ENCODE measurements at regions of chr5 and their contacts with region 1.

Region 1: GRCh38 chr5:73783828-73784227 is 157.8 kb downstream of the ARHGEF28 start:
- DNase-seq: no peak
- H3K4me3 ChIP-seq: no peak overlapping the region
- H3K27ac ChIP-seq: no peak overlapping the region
- H3K4me1 ChIP-seq: no peaks in the 10 kb centered on the region
- H3K27me3 ChIP-seq: no peaks in the 10 kb centered on the region
- CTCF ChIP-seq: no peak
- EP300 ChIP-seq: no peak
- POLR2A ChIP-seq: no peak

Region 2: DNA sequence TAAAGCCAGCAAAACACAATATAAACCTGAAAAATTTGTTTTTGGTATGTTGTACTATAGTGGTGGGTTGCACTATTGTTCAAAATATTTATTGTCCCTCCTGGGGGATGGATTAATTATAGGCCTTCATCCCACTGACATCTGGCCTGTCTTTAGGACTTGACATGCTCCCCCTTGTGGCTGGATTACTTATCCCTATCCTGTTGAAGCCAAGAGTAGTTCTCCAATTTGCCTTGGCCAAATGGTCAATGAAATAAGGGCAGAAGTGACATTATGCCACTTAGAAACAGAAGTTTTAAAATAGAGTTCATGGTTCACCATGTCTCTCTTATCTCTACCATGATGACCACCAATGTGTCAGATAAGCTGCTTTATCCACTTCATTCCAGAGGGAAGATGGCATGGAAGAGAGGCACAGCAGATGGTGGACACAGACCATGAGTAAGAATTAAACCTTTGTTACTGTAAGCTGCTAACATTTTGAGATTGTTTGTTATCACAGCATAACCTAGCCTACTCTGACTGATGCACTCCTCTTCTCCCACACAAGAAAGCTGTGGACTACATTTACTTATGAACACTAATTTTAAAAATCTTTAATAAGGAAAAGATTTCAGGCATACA is 187.0 kb before region 1 on chr5:
- intact Hi-C with region 1: loop called in 1 of 4 experiments (anchors 5 kb)
- DNase-seq: no peak
- H3K4me3 ChIP-seq: no peak overlapping the region
- H3K27ac ChIP-seq: no peak overlapping the region
- H3K4me1 ChIP-seq: no peaks in the 10 kb centered on the region
- H3K27me3 ChIP-seq: no peaks in the 10 kb centered on the region
- CTCF ChIP-seq: no peak
- EP300 ChIP-seq: no peak
- POLR2A ChIP-seq: no peak

Region 3: DNA sequence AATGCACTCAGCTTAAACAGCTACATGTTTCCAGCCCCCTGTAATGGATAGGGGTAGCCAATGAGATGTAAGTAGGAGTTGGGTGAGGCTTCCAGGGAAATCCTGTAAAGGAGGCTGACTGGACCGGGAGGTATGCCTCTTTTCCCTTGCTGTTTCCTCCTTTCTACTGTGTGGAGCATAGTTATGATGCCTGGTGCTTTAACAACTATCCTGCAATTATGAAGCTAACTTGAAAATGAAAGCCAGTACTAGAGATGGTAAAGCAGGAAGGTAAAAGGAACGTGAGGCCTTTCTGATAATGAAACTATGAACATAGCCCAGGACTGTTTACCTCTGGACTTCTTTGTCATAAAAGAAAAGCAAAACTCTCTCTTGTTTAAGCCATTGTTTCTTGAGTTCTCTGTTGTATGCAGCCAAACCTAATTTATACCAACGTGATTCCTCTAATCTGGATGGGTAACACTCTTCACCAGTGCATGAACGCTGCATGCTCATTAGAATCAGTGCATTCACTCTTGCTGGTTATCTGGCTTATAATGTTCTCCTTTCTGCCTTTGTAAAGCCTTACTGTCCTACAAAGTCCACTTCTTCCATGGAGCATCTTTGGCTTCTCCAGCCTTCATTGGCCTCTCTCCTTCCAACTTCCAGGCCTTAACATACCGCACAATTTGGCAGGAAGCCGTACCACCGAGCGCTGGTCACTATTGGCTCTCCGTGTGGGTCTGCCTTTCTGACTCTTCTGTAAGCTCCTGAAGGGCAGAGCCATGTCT is 166.1 kb before region 1 on chr5:
- intact Hi-C with region 1: loop called in 1 of 4 experiments (anchors 10 kb)
- DNase-seq: no peak
- H3K4me3 ChIP-seq: no peak overlapping the region
- H3K27ac ChIP-seq: no peak overlapping the region
- H3K4me1 ChIP-seq: peaks cover 2% of the 10 kb centered on the region
- H3K27me3 ChIP-seq: no peaks in the 10 kb centered on the region
- CTCF ChIP-seq: no peak
- EP300 ChIP-seq: no peak
- POLR2A ChIP-seq: no peak

Measured in ovary (tissue), 10 donors.